OCI-LY7 (cell line): ENCODE measurements at regions of chr12 and their contacts with region 1.

Region 1: DNA sequence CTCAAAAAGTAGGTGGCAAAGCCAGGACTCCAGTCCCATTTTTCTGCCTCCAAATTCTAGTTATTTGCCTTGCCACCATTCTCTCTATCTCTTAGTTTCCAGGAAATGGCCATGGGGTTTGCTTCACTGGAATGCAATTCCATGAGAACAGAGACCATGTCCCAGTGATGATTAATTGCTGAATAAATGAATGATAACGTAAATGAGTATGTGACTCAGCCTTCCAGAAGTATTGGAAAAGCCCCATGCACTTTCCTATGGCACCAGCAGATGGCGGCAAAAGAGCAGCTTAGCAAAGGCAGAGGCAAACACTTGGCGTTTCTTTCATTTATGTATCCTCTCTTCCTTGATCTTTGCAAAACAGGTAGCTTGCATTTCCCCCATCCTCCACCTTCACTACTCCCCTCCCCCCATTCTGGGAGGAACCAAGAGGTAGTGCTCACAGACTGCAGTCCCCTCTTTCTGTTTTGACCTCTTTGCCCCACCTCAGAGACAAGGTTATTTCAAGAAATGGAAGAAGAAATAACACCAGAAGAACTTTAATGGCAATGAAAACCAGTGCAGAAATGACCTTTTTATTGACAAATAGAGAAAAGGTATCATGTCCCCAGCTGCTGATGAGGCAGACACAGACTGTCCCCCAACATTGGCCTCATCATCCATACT is 21.3 kb downstream of the TBX3 start:
- DNase-seq: peak; percentile 56
- H3K4me3 ChIP-seq: no peak overlapping the region
- H3K27ac ChIP-seq: no peak overlapping the region
- H3K4me1 ChIP-seq: no peaks in the 10 kb centered on the region
- CTCF ChIP-seq: peak; percentile 88

Region 2: GRCh38 chr12:115752913-115753726 is 1090.5 kb after region 1 on chr12:
- CTCF ChIA-PET with region 1: no interaction called
- POLR2A ChIA-PET with region 1: no interaction called
- intact Hi-C with region 1: loop called (anchors 1 kb)
- DNase-seq: peak; percentile 44
- H3K4me3 ChIP-seq: no peak overlapping the region
- H3K27ac ChIP-seq: no peak overlapping the region
- H3K4me1 ChIP-seq: no peaks in the 10 kb centered on the region
- CTCF ChIP-seq: peak; percentile 79

Region 3: DNA sequence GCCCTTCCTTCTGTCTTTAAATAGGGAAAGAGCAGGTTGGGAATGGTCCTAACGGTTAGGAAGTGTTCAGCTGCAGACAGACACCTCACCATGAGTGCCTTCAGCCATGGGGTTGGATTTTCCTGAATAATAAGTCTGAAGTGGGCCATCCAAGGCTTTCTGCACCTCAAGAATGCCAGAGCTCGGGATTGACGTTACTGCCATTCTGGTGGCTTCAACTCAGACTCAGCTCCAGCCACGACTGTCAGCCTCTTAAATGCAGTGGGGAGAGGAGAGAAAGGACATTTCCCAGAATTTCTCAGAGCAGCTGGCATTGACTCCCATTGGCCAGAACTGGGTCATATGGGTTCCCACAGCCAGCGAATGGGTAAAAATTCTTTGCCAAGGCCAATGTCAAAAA is 1251.5 kb after region 1 on chr12:
- CTCF ChIA-PET with region 1: interaction called, 3 read pairs
- POLR2A ChIA-PET with region 1: no interaction called
- intact Hi-C with region 1: loop called (anchors 2 kb)
- DNase-seq: no peak
- H3K4me3 ChIP-seq: no peak overlapping the region
- H3K27ac ChIP-seq: no peak overlapping the region
- H3K4me1 ChIP-seq: no peaks in the 10 kb centered on the region
- CTCF ChIP-seq: no peak